ENCODE measurements at regions of chr19 and their contacts with region 1.

Region 1: DNA sequence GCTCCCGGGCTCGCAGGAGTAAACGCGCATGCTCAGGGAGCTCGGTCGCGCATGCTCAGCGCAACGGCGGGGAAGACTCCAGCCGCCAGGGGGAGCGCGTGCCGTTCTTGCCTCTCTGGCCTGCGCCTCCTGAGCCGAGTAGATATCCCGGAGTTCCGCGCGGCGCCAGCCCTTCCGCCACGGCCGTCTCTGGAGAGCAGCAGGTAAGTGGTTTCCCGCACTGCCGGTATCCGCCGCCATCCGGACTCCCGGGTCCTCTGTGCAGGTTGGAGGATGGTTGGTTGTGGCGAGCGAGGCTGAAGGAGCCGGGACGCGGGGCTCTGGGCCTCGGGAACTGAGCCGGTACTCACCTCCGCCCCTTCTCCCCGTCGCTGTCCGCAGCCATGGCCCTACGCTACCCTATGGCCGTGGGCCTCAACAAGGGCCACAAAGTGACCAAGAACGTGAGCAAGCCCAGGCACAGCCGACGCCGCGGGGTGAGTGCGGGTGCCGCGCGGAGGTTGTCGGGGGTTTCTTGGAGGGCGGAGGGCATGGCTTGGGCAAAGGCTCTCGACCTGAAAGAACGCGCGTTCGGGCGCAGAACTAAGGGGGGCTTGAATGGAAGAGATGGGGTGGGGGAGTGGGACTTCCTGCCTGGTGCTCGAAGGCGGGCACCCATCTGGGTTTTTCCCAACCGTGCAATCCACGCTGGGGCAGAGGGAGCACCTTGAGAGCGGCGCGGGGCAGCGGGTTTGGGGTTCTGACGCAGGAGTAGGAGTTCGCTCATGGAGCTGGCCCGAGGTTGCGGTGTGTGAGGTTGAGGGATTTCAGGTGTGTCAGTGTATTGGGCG is at the start of gene RPL36:
- DNase-seq: peak; percentile 98
- H3K4me3 Mint-ChIP-seq: peak within 1 kb of the TSS; percentile 92
- H3K27ac Mint-ChIP-seq: peak within 1 kb of the TSS; percentile 92
- H3K4me1 Mint-ChIP-seq: peaks cover 31% of the 10 kb centered on the region
- H3K27me3 Mint-ChIP-seq: no peaks in the 10 kb centered on the region
- total RNA-seq, gene RPL36: 880 to 925 TPM

Region 2: DNA sequence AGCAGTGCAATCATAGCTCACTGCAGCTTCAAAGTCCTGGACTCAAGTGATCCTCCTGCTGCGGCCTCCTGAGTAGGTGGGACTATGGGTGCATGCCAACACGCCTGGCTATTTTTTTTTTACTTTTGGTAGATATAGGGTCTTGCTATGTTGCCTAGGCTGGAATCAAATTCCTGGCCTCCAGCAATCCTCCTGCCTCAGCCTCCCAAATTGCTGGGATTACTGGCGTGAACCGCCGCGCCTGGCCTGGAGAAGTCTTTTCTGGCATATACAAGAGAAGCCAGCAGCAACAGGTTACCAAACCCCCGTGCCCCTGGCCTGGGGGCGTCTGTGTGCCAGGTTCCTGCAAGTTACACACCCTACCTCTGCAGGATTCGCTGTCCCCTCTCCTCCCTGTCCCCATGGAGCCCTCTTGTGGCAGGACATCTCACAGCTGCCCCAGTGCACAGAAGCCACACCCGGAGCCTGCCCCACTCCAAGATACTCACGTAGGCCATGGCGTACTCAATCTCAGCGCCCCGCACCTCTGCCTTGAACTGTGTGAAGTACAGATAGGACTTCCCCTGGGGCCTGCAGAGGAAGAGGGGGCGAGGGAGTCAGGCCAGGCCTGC is 1030.1 kb before region 1 on chr19:
- CTCF ChIA-PET with region 1: no interaction called
- POLR2A ChIA-PET with region 1: no interaction called
- DNase-seq: peak; percentile 44
- H3K4me3 Mint-ChIP-seq: no peak overlapping the region
- H3K27ac Mint-ChIP-seq: no peak overlapping the region
- H3K4me1 Mint-ChIP-seq: peaks cover 9% of the 10 kb centered on the region
- H3K27me3 Mint-ChIP-seq: no peaks in the 10 kb centered on the region

Region 3: GRCh38 chr19:5676105-5676771 is 14.1 kb before region 1 on chr19:
- CTCF ChIA-PET with region 1: interaction called, 10 read pairs
- POLR2A ChIA-PET with region 1: no interaction called
- DNase-seq: no peak
- H3K4me3 Mint-ChIP-seq: no peak overlapping the region
- H3K27ac Mint-ChIP-seq: no peak overlapping the region
- H3K4me1 Mint-ChIP-seq: peaks cover 8% of the 10 kb centered on the region
- H3K27me3 Mint-ChIP-seq: no peaks in the 10 kb centered on the region

Region 4: GRCh38 chr19:5707576-5708575 is 17.5 kb after region 1 on chr19:
- CTCF ChIA-PET with region 1: interaction called, 16 read pairs
- POLR2A ChIA-PET with region 1: interaction called, 4 read pairs
- DNase-seq: no peak
- H3K4me3 Mint-ChIP-seq: no peak overlapping the region
- H3K27ac Mint-ChIP-seq: no peak overlapping the region
- H3K4me1 Mint-ChIP-seq: no peaks in the 10 kb centered on the region
- H3K27me3 Mint-ChIP-seq: no peaks in the 10 kb centered on the region

Region 5: GRCh38 chr19:5714819-5715218 is 24.5 kb after region 1 on chr19:
- CTCF ChIA-PET with region 1: interaction called, 17 read pairs
- POLR2A ChIA-PET with region 1: interaction called, 4 read pairs
- DNase-seq: no peak
- H3K4me3 Mint-ChIP-seq: no peak overlapping the region
- H3K27ac Mint-ChIP-seq: no peak overlapping the region
- H3K4me1 Mint-ChIP-seq: peaks cover 28% of the 10 kb centered on the region
- H3K27me3 Mint-ChIP-seq: no peaks in the 10 kb centered on the region

Region 6: GRCh38 chr19:5719961-5720790 is 29.8 kb after region 1 on chr19 and contains the starts of genes CATSPERD and LONP1:
- CTCF ChIA-PET with region 1: interaction called, 17 read pairs
- POLR2A ChIA-PET with region 1: interaction called, 5 read pairs
- DNase-seq: peak; percentile 99
- H3K4me3 Mint-ChIP-seq: peak within 1 kb of the TSS; percentile 96
- H3K27ac Mint-ChIP-seq: peak within 1 kb of the TSS; percentile 97
- H3K4me1 Mint-ChIP-seq: peaks cover 33% of the 10 kb centered on the region
- H3K27me3 Mint-ChIP-seq: no peaks in the 10 kb centered on the region
- total RNA-seq, gene CATSPERD: not detected
- total RNA-seq, gene LONP1: 71.7 to 79.6 TPM

Region 7: DNA sequence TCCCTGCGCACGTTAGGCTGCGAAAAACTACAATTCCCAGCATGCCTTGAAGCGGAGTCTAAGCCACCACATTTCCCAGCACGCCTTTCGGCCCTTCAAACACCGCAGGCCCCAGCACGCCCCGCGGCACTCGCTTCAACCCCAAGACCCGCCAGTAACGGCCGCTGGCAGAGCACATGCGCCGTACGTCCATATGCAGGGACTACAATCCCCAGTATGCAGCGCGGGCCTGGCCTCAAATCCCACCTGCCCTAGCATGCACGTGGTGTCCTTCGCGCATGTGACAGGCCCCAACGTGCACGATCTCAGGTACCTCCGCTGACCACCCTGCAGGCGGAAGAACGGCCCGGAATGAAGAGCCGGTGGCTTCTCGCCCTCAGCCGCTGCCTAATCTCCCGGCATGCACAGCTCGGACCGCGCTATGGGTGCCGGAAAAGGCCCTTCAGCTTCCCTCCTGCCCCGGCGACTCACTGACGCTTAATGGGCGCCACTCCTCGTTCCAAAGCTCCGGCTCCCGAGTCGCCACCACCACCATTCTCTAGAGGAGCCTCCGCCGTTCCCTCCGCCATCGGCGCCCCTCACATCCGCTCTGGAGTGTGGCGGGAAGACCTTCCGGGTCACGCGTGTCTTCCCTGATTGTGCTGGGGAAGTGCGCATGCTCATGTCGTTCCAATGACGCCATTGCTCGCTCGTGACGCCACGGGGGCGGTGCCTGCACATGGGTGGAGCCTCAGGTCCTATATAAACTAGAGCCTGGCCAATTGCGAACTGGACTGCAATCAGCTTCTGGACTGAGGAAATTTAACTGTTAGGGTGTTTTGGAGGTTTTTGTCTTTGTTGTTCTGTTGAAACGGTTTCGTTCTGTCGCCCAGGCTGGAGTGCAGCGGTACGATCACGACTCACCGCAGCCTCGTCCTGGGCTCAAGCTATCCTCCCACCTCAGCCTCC is 100.5 kb after region 1 on chr19 and contains the start of gene DUS3L:
- CTCF ChIA-PET with region 1: interaction called, 10 read pairs
- POLR2A ChIA-PET with region 1: interaction called, 4 read pairs
- DNase-seq: peak; percentile 97
- H3K4me3 Mint-ChIP-seq: peak within 1 kb of the TSS; percentile 100
- H3K27ac Mint-ChIP-seq: peak within 1 kb of the TSS; percentile 100
- H3K4me1 Mint-ChIP-seq: peaks cover 11% of the 10 kb centered on the region
- H3K27me3 Mint-ChIP-seq: no peaks in the 10 kb centered on the region
- total RNA-seq, gene DUS3L: 49.9 to 60.8 TPM

Measured in activated CD4-positive, alpha-beta T cell treated with anti-CD3 and anti-CD28 coated beads, Interleukin-2, amount 10 ng/mL, durations not matched to agents 7 days and 5 days (primary cell).